GM12878 (cell line): ENCODE measurements at regions of chr1 and their contacts with region 1.

Region 1: GRCh38 chr1:181479137-181479745 is 4.1 kb upstream of the CACNA1E start:
- DNase-seq: peak; percentile 56
- ATAC-seq: peak; percentile 66
- H3K4me3 ChIP-seq: no peak overlapping the region
- H3K27ac ChIP-seq: no peak overlapping the region
- H3K4me1 ChIP-seq: peaks cover 20% of the 10 kb centered on the region
- H3K27me3 ChIP-seq: no peaks in the 10 kb centered on the region
- CTCF ChIP-seq: peak; percentile 87 to 95 (median 92)
- EP300 ChIP-seq: no peak
- POLR2A ChIP-seq: no peak
- RAD21 ChIP-seq: peak; percentile 95

Region 2: GRCh38 chr1:181324797-181325616 is 154.2 kb before region 1 on chr1:
- CTCF ChIA-PET with region 1: no interaction called
- POLR2A ChIA-PET with region 1: no interaction called
- RAD21 ChIA-PET with region 1: no interaction called
- SMC1A ChIA-PET with region 1: no interaction called
- in situ Hi-C with region 1: no loop called
- intact Hi-C with region 1: no loop called
- DNase-seq: no peak
- ATAC-seq: no peak
- H3K4me3 ChIP-seq: no peak overlapping the region
- H3K27ac ChIP-seq: no peak overlapping the region
- H3K4me1 ChIP-seq: no peaks in the 10 kb centered on the region
- H3K27me3 ChIP-seq: peaks cover 3 to 5% of the 10 kb centered on the region in 2 experiments; a peak in 2 of 4 replicates
- CTCF ChIP-seq: no peak
- EP300 ChIP-seq: no peak
- POLR2A ChIP-seq: no peak
- RAD21 ChIP-seq: no peak

Region 3: DNA sequence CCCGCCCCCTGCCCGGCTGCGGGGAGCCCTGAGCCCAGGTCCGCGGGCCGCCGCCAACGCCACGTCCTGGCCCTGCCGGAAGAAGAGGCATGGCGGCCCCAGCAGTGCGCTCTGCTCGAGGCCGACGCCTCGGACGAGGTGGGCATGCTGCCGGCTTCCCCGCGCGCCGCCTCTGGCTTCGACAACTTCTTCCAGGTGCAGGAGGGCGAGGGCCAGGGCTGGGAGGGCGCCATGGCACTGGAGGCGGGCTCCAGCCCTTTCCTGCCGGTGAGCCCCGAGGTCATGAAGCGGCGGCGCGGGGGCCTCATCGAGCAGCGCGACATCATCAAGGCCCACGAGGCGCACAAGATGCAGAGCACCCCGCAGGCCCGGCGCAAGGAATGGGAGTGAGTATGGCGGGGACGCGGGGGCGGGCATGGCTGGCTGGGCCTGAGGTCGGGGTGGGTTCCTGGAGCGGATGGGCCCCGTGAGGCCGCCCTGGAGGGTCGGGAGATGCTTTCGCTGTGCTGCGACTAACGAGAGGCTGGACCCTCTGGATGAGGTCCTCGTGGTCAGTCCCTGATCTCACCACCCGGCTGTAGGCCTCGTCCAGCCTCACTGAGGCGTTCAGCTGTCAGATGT is 65.9 kb before region 1 on chr1:
- CTCF ChIA-PET with region 1: no interaction called
- POLR2A ChIA-PET with region 1: no interaction called
- RAD21 ChIA-PET with region 1: no interaction called
- SMC1A ChIA-PET with region 1: no interaction called
- in situ Hi-C with region 1: no loop called
- intact Hi-C with region 1: no loop called
- DNase-seq: no peak
- ATAC-seq: no peak
- H3K4me3 ChIP-seq: no peak overlapping the region
- H3K27ac ChIP-seq: no peak overlapping the region
- H3K4me1 ChIP-seq: no peaks in the 10 kb centered on the region; the same call in 1 of the 2 replicates
- H3K27me3 ChIP-seq: no peaks in the 10 kb centered on the region; a peak in 1 of 4 replicates
- CTCF ChIP-seq: no peak
- EP300 ChIP-seq: no peak
- POLR2A ChIP-seq: no peak
- RAD21 ChIP-seq: no peak

Region 4: DNA sequence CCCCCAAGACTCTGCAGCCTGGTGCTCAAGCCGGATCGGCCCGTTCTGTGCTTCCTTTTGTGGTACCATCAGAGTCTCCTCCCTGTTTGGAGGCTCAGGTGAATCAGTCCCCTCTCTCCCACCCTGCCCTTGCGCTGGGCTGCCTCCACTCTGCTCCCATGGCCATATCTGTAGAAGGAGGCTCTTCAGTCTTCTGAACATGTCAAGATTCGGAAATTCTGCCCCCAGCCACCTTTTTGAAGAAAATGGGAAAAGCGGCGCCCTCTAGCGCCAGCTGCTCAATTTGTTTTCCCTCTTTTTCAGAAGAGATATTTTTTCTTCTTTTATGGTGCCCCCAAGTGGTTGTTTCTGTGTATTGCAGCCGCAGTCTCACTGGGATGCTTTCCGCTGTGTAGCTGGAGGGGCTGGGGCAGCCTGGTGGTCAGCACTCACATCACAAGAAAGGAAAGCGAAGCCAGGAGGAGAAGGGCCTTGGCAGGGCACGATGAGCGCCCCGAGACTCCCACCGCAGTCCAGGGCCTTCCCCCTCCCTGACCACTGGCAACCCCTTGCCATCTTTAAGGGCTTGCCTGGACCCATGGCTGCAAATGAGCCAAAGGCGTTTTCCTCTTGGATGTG is 54.3 kb before region 1 on chr1:
- CTCF ChIA-PET with region 1: interaction called, 54 read pairs
- POLR2A ChIA-PET with region 1: interaction called, 38 read pairs
- RAD21 ChIA-PET with region 1: interaction called, 155 read pairs
- SMC1A ChIA-PET with region 1: interaction called, 123 read pairs
- in situ Hi-C with region 1: no loop called
- intact Hi-C with region 1: loop called (anchors 1 kb)
- DNase-seq: no peak
- ATAC-seq: peak; percentile 71
- H3K4me3 ChIP-seq: no peak overlapping the region
- H3K27ac ChIP-seq: no peak overlapping the region
- H3K4me1 ChIP-seq: peaks cover 30% of the 10 kb centered on the region
- H3K27me3 ChIP-seq: no peaks in the 10 kb centered on the region; a peak in 2 of 4 replicates
- CTCF ChIP-seq: peak; percentile 87 to 100 (median 98)
- EP300 ChIP-seq: no peak
- POLR2A ChIP-seq: no peak
- RAD21 ChIP-seq: peak; percentile 91

Region 5: GRCh38 chr1:181459067-181459466 is 20.2 kb before region 1 on chr1:
- CTCF ChIA-PET with region 1: interaction called, 51 read pairs
- POLR2A ChIA-PET with region 1: interaction called, 3 read pairs
- RAD21 ChIA-PET with region 1: interaction called, 8 read pairs
- SMC1A ChIA-PET with region 1: interaction called, 59 read pairs
- in situ Hi-C with region 1: no loop called
- intact Hi-C with region 1: no loop called
- DNase-seq: no peak
- ATAC-seq: peak; percentile 18; the same call in 1 of the 3 replicates
- H3K4me3 ChIP-seq: no peak overlapping the region
- H3K27ac ChIP-seq: no peak overlapping the region
- H3K4me1 ChIP-seq: no peaks in the 10 kb centered on the region
- H3K27me3 ChIP-seq: no peaks in the 10 kb centered on the region
- CTCF ChIP-seq: no peak
- EP300 ChIP-seq: no peak
- POLR2A ChIP-seq: no peak
- RAD21 ChIP-seq: no peak

Region 6: DNA sequence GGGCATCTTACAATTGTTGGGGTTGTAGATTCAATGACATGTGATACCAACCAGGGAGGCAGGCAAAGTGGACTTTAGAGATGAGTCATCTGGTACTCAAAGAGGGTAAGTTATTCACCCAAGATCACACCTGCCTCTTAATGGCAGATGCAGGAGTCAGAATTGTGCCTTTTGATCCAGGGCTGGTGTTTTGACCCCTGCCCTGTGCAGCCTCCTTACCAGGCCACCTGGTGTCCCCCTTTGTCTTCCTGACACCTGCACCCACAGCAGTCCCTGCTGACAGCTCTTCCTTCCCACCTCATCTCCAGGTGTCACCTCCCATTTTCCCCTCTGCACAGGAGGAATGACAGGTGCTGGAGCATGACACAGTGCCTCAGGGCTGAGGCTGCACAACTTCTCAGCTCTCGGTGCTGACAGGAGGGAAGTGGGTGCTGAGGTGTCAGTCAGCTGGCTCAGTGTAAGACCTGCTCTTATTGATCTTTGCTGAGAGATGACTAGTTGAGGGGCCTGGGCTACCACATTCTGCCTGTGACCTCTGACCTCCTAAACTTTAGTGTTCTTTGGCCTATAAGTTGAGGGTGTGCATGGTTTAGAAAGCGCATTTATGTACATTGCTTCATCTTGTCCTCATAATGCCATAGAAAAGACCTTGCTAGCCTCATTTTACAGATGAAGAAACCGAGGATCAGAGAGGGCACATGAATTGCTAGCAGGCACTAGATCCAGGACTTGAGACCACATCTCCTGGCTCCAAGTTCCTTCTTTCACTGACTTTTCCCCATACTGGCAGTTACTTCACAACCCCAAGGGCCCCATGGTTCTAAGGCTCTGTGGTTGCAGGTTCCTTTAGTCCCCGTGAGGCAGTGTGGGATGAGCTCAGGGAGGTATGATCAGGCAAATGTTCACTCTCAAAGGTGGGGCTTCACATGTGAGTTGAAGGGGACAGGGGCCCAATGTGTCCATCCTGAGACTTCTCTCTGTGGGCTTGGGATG is 35.4 kb after region 1 on chr1:
- CTCF ChIA-PET with region 1: interaction called, 9 read pairs
- POLR2A ChIA-PET with region 1: interaction called, 8 read pairs
- RAD21 ChIA-PET with region 1: interaction called, 278 read pairs
- SMC1A ChIA-PET with region 1: interaction called, 24 read pairs
- in situ Hi-C with region 1: no loop called
- intact Hi-C with region 1: no loop called
- DNase-seq: peak; percentile 54
- ATAC-seq: peak; percentile 91
- H3K4me3 ChIP-seq: no peak overlapping the region
- H3K27ac ChIP-seq: peak overlapping the region; percentile 35
- H3K4me1 ChIP-seq: peaks cover 18% of the 10 kb centered on the region
- H3K27me3 ChIP-seq: no peaks in the 10 kb centered on the region
- CTCF ChIP-seq: peak in 2 of 3 experiments; percentile 4 to 27; a peak in 2 of 6 replicates
- EP300 ChIP-seq: 0 out of 4 replicates have a peak, but pooled peaks of 1 of the 2 experiments have one; percentile 40
- POLR2A ChIP-seq: no peak
- RAD21 ChIP-seq: no peak

Region 7: GRCh38 chr1:181669246-181669645 is 190.0 kb after region 1 on chr1:
- CTCF ChIA-PET with region 1: interaction called, 175 read pairs
- POLR2A ChIA-PET with region 1: no interaction called
- RAD21 ChIA-PET with region 1: interaction called, 35 read pairs
- SMC1A ChIA-PET with region 1: interaction called, 91 read pairs
- in situ Hi-C with region 1: no loop called
- intact Hi-C with region 1: no loop called
- DNase-seq: no peak
- ATAC-seq: no peak
- H3K4me3 ChIP-seq: no peak overlapping the region
- H3K27ac ChIP-seq: no peak overlapping the region
- H3K4me1 ChIP-seq: no peaks in the 10 kb centered on the region
- H3K27me3 ChIP-seq: no peaks in the 10 kb centered on the region
- CTCF ChIP-seq: no peak
- EP300 ChIP-seq: no peak
- POLR2A ChIP-seq: no peak
- RAD21 ChIP-seq: no peak

Region 8: DNA sequence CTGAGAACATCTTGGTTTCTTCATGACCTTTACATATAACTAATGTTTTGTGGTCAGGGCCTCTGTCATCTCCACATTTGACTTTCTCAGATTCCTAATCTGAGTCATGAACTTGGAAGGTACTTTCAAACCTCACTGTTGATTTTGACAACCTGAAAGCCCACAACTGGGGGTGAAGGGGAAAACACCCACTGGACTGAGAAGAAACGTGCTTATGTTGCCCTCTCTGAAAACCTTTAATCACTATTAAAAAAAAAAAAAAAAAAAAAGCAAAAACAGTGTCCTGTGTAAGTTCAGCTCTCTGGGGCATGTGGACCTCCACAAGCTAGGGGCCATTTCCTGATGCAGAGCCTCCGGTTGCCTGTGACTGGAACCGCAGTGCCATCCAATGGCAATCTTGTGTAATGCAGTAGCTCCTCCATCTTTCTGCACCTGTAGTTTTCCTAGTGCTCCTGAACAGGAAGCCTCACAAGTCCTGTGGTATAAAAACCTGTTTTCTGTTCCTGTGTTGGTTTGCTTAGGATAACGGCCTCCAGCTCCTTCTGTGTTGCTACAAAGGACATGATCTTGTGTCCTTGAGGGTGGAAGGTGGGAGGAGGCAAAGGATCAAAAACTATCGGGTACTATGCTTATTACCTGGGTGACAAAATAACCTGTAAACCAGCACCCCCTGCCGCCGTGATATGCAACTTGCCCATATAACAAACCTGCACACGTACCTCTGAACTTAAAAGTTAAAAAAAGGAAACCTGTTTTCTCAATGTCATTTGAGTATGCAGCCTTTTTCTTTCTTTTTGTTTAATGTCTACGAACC is 457.7 kb after region 1 on chr1:
- CTCF ChIA-PET with region 1: interaction called, 319 read pairs
- POLR2A ChIA-PET with region 1: interaction called, 33 read pairs
- RAD21 ChIA-PET with region 1: interaction called, 299 read pairs
- SMC1A ChIA-PET with region 1: interaction called, 260 read pairs
- in situ Hi-C with region 1: loop called (anchors 5 kb)
- intact Hi-C with region 1: loop called (anchors 1 kb)
- DNase-seq: peak; percentile 86
- ATAC-seq: peak; percentile 90
- H3K4me3 ChIP-seq: no peak overlapping the region
- H3K27ac ChIP-seq: peak overlapping the region; percentile 82
- H3K4me1 ChIP-seq: peaks cover 16% of the 10 kb centered on the region
- H3K27me3 ChIP-seq: no peaks in the 10 kb centered on the region
- CTCF ChIP-seq: peak; percentile 83 to 91 (median 84)
- EP300 ChIP-seq: peak; percentile 92 to 95
- POLR2A ChIP-seq: no peak
- RAD21 ChIP-seq: peak; percentile 95

Region 9: DNA sequence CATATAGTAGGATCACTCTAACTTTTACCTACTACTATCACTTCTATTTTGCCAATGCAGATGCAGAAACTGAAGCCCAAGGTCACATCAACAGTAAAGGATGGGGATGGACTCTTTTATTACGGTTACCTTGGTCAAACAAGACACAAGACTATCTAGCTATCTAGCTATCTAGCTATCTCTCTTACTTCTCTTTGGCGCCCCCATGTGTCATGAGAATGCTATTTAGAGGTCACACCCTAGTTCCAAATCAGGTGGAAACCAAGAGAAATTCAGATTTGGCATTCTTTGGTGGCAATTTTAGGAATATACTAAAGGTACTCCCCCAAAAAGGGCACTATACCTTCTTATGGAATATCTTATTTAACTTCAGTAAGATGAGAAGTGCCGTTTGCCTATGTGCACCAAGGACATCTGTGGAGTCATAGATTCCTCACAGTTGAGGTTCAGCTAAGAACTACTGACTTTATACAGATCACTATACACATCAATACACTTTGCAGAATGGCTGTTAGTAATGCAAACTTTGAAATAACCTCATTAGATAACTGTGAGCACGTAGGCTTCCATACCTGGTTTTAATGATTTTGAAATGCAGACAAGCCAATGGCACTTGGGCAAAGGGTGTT is 575.6 kb after region 1 on chr1:
- CTCF ChIA-PET with region 1: interaction called, 119 read pairs
- POLR2A ChIA-PET with region 1: no interaction called
- RAD21 ChIA-PET with region 1: interaction called, 43 read pairs
- SMC1A ChIA-PET with region 1: interaction called, 58 read pairs
- in situ Hi-C with region 1: no loop called
- intact Hi-C with region 1: loop called (anchors 2 kb)
- DNase-seq: peak; percentile 8
- ATAC-seq: peak; percentile 92
- H3K4me3 ChIP-seq: no peak overlapping the region
- H3K27ac ChIP-seq: no peak overlapping the region
- H3K4me1 ChIP-seq: no peaks in the 10 kb centered on the region
- H3K27me3 ChIP-seq: peaks cover 3 to 5% of the 10 kb centered on the region in 2 experiments; a peak in 3 of 4 replicates
- CTCF ChIP-seq: peak; percentile 64 to 72 (median 71); a peak in 5 of 6 replicates
- EP300 ChIP-seq: no peak
- POLR2A ChIP-seq: no peak
- RAD21 ChIP-seq: peak; percentile 83

Region 10: GRCh38 chr1:182381962-182382819 is 903.0 kb after region 1 on chr1:
- CTCF ChIA-PET with region 1: no interaction called
- POLR2A ChIA-PET with region 1: no interaction called
- RAD21 ChIA-PET with region 1: no interaction called
- SMC1A ChIA-PET with region 1: no interaction called
- in situ Hi-C with region 1: no loop called
- intact Hi-C with region 1: no loop called
- DNase-seq: no peak
- ATAC-seq: no peak
- H3K4me3 ChIP-seq: no peak overlapping the region
- H3K27ac ChIP-seq: no peak overlapping the region
- H3K4me1 ChIP-seq: no peaks in the 10 kb centered on the region
- H3K27me3 ChIP-seq: no peaks in the 10 kb centered on the region
- CTCF ChIP-seq: no peak
- EP300 ChIP-seq: no peak
- POLR2A ChIP-seq: no peak
- RAD21 ChIP-seq: no peak